Ascending aorta (tissue), 2 donors: ENCODE measurements at regions of chr1 and their contacts with region 1.

Region 1: DNA sequence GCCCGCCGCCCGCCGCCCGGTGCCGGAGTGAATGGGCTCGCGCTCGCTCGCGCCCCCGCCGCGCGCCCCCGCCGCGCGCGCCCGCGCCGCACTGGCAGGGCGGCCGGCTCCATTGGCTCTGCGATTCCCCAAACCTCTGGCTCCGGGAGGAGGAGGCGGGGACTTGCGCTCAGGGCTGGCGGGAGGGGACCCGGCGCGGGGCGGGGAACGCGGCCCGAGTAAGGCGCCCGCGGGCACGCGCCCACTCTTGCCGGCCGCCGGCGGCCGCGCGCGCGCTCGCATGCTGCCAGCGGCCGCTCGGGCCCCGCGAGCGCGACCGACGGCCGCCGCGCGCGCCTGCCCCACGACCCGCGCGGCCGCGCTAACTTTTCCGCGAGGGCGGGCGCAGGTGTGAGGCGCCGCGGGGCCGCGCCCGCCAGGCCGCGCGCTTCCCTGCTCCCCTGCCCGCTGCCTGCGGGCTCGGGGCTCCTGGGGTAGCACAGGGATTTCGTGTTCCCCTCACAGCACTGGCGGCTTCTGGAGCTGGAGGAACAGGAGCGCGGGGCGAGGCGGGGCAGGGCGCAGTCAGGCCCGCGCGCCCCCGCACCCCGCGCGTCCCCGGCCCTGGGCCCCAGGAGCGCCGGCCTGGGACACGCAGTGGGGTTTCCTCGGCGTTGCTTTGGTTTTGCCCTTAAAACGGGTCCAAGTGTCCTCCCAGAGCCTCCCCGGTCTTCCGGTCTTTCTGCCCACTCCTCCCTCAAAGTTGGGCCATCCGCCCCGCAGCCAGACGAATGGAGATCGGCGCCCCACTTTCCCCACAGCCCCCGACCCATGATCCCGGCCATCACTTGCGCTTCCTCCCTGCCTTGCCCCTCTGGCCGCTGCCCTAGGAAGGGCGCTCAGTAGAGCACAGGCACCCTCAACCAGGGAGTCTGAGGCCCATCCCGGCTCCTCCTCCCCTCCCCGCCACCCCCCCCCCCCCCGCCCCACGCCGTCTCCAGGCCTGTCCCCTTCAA is 101.5 kb downstream of the CASZ1 start:
- DNase-seq: peak; percentile 43 to 96
- H3K4me3 ChIP-seq: peak overlapping the region; percentile 72 to 80
- H3K27ac ChIP-seq: peak overlapping the region; percentile 34 to 83
- H3K4me1 ChIP-seq: peaks cover 0 to 26% of the 10 kb centered on the region in 2 donors
- H3K27me3 ChIP-seq: no peaks in the 10 kb centered on the region
- CTCF ChIP-seq: no peak

Region 2: GRCh38 chr1:9823943-9824701 is 870.8 kb before region 1 on chr1 and contains the start of gene CLSTN1:
- intact Hi-C with region 1: loop called (anchors 2 kb)
- DNase-seq: peak in 1 of 2 donors; percentile 94
- H3K4me3 ChIP-seq: peak within 1 kb of the TSS; percentile 89 to 96
- H3K27ac ChIP-seq: peak within 1 kb of the TSS; percentile 90 to 96
- H3K4me1 ChIP-seq: peaks cover 8 to 19% of the 10 kb centered on the region in 2 donors
- H3K27me3 ChIP-seq: no peaks in the 10 kb centered on the region
- CTCF ChIP-seq: no peak
- total RNA-seq, gene CLSTN1: 84.6 TPM

Region 3: DNA sequence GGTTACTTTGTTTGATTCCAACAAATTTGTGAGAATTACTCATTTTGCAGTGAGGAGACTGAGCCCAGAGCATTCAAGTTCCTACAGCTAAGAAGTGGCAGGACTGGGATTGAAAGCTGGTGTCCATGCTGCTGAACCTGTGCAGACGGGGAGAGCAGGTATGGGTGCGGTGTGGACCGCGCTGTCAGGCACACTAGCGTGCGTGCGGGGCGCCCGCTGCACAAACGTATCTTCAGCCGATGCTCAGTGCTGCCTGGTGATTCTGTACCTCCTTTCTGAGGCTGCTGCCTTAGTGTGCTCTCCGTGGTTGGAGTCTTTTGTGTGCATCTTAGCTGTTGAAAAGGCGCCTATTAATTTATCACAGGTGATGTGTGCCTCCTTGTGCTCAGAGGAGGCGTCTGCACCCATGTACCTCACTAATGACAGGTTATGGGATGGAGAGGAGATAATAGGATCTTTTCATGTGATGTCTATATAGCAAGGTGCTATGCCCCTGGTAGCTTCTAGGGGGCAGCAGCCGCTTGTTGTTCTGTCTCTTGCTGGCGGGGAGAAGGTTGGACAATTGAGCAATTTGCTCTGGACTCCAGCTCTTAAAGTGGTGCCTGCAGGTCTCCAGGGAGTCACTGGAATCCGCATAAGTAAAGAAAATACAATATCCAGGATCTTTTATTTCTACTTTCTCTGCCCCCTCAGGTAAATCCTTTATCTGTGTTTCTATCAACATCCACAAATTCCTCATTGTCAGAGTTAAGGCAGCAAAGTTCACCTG is 187.6 kb before region 1 on chr1:
- intact Hi-C with region 1: loop called (anchors 5 kb)
- DNase-seq: peak in 1 of 2 donors; percentile 84
- H3K4me3 ChIP-seq: peak overlapping the region in 1 of 2 donors; percentile 14
- H3K27ac ChIP-seq: no peak overlapping the region
- H3K4me1 ChIP-seq: peaks cover 13 to 16% of the 10 kb centered on the region in 2 donors
- H3K27me3 ChIP-seq: no peaks in the 10 kb centered on the region
- CTCF ChIP-seq: peak; percentile 76 to 94 (median 85)

Region 4: GRCh38 chr1:10530281-10530740 is 164.6 kb before region 1 on chr1:
- intact Hi-C with region 1: loop called (anchors 5 kb)
- DNase-seq: peak in 1 of 2 donors; percentile 66
- H3K4me3 ChIP-seq: peak overlapping the region in 1 of 2 donors; percentile 33
- H3K27ac ChIP-seq: peak overlapping the region; percentile 31 to 74
- H3K4me1 ChIP-seq: peaks cover 10 to 26% of the 10 kb centered on the region in 2 donors
- H3K27me3 ChIP-seq: no peaks in the 10 kb centered on the region
- CTCF ChIP-seq: peak; percentile 51 to 67 (median 60)

Region 5: GRCh38 chr1:10635085-10635896 is 59.6 kb before region 1 on chr1:
- intact Hi-C with region 1: loop called (anchors 2 kb)
- DNase-seq: peak in 1 of 2 donors; percentile 83
- H3K4me3 ChIP-seq: peak overlapping the region in 1 of 2 donors; percentile 18
- H3K27ac ChIP-seq: peak overlapping the region; percentile 97 to 99
- H3K4me1 ChIP-seq: peaks cover 35 to 65% of the 10 kb centered on the region in 2 donors
- H3K27me3 ChIP-seq: no peaks in the 10 kb centered on the region
- CTCF ChIP-seq: no peak

Region 6: GRCh38 chr1:10663678-10664035 is 31.3 kb before region 1 on chr1:
- intact Hi-C with region 1: loop called (anchors 2 kb)
- DNase-seq: peak; percentile 41 to 87
- H3K4me3 ChIP-seq: peak overlapping the region in 1 of 2 donors; percentile 44
- H3K27ac ChIP-seq: peak overlapping the region; percentile 74 to 90
- H3K4me1 ChIP-seq: peaks cover 8 to 40% of the 10 kb centered on the region in 2 donors
- H3K27me3 ChIP-seq: no peaks in the 10 kb centered on the region
- CTCF ChIP-seq: no peak

Region 7: DNA sequence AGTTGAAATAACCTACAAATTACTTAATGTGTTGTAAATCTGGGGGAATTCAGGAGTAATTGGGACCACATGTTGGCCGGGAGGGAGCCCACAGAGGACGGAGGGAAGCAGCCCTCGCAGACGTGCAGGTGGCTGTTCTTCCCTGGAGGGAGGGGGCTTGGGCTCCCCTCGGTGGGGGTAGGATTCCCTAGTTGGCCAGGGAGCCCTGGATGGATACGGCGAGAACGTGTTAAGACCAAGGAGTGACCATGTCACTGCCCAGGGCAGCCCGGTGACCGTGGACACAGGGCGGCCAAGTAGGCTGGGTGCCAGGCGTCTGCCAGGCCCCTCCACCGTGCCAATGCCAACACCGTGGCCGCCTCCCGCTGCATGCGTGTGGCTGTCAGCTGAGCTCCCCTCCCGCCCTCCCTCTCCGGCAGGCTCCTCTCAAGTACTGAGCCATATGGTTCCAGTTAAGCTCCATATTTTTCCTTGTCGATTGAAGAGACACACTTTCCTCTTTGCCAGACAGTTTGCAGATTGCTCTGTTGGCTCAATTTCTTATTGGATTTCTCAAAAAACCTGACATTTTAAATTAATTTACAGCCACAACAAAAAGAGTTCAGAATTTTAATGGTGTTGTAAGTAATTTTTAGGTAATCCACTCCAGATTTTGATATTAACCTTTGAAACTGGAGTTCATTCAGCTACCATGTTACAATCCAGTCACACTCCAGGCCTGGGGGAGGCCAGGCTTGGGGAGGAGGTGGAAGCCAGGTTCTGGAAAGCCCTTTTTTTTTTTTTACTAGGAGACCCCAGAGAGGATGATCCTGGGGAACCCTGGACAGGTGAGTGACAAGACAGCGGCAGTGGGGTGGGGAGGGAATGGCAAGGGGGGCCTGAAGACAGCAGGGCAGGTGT is 30.3 kb after region 1 on chr1:
- intact Hi-C with region 1: loop called (anchors 2 kb)
- DNase-seq: peak in 1 of 2 donors; percentile 73
- H3K4me3 ChIP-seq: no peak overlapping the region
- H3K27ac ChIP-seq: peak overlapping the region; percentile 35 to 76
- H3K4me1 ChIP-seq: peaks cover 0 to 22% of the 10 kb centered on the region in 2 donors
- H3K27me3 ChIP-seq: no peaks in the 10 kb centered on the region
- CTCF ChIP-seq: no peak